ENCODE measurements at regions of chr7 and their contacts with region 1.

Region 1: GRCh38 chr7:28155019-28155660 is 25.5 kb downstream of the JAZF1 start:
- DNase-seq: no peak
- H3K4me3 Mint-ChIP-seq: peak overlapping the region; percentile 4
- H3K27ac Mint-ChIP-seq: peak overlapping the region; percentile 61
- H3K4me1 Mint-ChIP-seq: peaks cover 51% of the 10 kb centered on the region
- H3K27me3 Mint-ChIP-seq: peaks cover 2% of the 10 kb centered on the region

Region 2: DNA sequence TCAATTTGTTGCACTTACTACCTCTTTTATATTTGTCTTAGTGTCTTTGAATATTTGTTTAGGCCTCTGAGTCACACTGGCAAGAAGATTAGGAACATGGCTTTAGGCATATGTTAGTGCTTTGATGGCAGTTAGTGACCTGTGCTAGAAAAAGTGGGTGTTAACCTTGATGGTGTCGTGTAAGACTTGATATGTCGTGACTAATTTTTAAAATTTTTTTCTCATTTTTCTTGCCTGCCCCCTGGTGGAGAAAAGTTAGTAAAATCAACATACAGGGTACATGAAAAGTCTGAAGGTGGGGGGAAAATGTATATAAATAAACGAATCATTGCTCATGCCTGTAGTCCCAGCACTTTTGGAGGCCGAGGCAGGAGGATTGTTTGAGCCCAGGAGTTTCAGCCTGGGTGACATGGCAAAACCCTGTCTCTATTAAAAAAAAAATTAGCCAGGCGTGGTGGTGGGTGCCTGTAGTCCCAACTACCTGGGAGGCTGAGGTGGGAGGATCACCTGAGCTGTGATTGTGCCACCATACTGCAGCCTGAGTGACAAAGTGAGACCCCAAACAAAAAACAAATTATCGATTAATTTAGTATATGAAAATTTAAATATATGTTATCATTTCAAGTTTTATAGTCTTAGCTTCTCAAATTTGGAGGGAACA is 370.6 kb before region 1 on chr7:
- CTCF ChIA-PET with region 1: no interaction called
- POLR2A ChIA-PET with region 1: no interaction called
- intact Hi-C with region 1: loop called (anchors 5 kb)
- DNase-seq: no peak
- H3K4me3 Mint-ChIP-seq: no peak overlapping the region
- H3K27ac Mint-ChIP-seq: no peak overlapping the region
- H3K4me1 Mint-ChIP-seq: peaks cover 33% of the 10 kb centered on the region
- H3K27me3 Mint-ChIP-seq: no peaks in the 10 kb centered on the region

Region 3: DNA sequence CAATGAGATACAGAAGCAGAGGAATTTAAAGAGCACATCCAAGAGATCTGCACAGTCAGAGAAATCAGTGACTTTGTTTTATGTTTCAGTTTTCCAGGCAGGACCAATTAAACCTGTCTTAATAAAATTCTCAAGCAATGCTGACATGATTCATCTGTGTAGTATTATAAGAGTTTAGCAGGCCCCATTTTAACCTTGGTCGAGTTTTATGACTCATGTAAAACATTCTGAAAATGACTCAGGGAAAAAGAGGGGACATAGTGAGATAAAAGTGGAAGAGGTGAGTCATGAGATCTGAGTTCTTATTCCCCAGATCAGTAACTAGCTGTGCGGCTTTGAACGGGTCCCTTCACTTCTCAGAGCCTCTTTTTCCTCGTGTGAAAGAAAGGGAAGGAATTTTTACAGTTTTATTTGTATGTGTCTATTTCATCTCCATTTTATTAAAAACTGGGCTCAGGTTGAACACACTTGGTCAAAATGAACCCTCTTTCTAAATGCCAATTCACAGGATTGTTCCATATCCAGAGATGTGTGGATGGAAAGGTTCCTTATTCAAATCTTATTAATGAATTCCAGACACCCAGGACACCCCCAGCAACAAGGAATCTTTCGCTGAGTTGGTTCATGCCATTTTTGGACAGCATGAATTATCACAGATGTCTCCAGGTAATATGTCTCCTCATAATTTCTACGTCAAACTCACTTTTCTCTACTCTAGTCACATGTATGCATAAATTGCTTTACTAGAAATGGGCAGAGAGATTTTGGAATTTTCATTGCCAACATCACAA is 117.7 kb before region 1 on chr7:
- CTCF ChIA-PET with region 1: no interaction called
- POLR2A ChIA-PET with region 1: no interaction called
- intact Hi-C with region 1: loop called (anchors 1 kb)
- DNase-seq: peak; percentile 41
- H3K4me3 Mint-ChIP-seq: no peak overlapping the region
- H3K27ac Mint-ChIP-seq: peak overlapping the region; percentile 39
- H3K4me1 Mint-ChIP-seq: peaks cover 43% of the 10 kb centered on the region
- H3K27me3 Mint-ChIP-seq: peaks cover 15% of the 10 kb centered on the region

Region 4: DNA sequence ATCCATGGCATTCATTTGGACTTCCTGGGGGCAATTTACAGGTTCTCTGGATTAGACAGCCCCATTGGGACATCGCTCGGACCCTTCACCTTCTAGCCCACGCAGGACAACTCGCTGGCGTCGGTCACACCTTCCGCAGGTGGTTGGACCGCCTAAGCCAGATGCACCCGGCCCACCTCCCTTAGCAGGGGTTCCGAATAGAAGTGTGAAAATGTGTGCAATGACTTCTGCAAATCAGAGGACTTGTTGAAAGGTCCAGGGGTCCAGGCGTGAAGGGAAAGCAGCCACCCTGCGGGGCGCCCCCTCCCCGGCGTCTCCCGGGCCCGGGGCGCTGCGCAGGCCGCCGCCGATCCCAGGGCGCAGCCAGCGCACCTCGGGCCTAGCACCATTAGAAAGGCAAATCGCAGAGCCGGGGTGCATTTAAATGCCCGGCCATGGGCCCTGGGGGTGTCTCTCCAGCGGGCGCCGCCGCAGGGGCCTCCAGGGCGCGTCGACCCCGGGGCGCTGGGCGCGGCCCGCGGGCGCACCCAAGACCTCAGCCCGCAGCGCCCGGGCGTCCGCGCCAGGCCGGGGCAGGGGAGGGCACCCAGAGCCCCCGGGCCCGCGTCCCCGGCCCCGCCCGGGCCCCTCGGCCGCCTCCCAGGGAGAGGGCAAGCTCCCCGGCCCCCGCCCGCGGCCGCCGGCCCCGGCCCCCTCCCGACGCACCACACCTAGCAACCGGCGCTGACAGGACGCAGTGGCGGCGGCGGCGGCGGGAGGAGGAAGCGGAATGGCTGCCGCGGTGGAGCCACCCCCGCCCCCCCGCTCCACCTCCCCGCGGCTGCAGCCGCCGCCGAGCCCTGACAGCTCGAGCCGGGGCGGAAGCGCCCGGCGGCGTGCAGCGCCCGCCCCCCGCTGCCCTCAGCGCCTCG is 24.2 kb after region 1 on chr7:
- CTCF ChIA-PET with region 1: no interaction called
- POLR2A ChIA-PET with region 1: no interaction called
- intact Hi-C with region 1: loop called (anchors 1 kb)
- DNase-seq: peak; percentile 79
- H3K4me3 Mint-ChIP-seq: peak overlapping the region; percentile 70
- H3K27ac Mint-ChIP-seq: peak overlapping the region; percentile 26
- H3K4me1 Mint-ChIP-seq: peaks cover 32% of the 10 kb centered on the region
- H3K27me3 Mint-ChIP-seq: peaks cover 7% of the 10 kb centered on the region

Region 5: GRCh38 chr7:28239823-28240204 is 84.7 kb after region 1 on chr7:
- CTCF ChIA-PET with region 1: no interaction called
- POLR2A ChIA-PET with region 1: no interaction called
- intact Hi-C with region 1: loop called (anchors 1 kb)
- DNase-seq: peak; percentile 12
- H3K4me3 Mint-ChIP-seq: no peak overlapping the region
- H3K27ac Mint-ChIP-seq: no peak overlapping the region
- H3K4me1 Mint-ChIP-seq: peaks cover 9% of the 10 kb centered on the region
- H3K27me3 Mint-ChIP-seq: peaks cover 43% of the 10 kb centered on the region

Region 6: GRCh38 chr7:28329661-28330363 is 174.7 kb after region 1 on chr7:
- CTCF ChIA-PET with region 1: no interaction called
- POLR2A ChIA-PET with region 1: no interaction called
- intact Hi-C with region 1: loop called (anchors 2 kb)
- DNase-seq: peak; percentile 11
- H3K4me3 Mint-ChIP-seq: no peak overlapping the region
- H3K27ac Mint-ChIP-seq: no peak overlapping the region
- H3K4me1 Mint-ChIP-seq: peaks cover 33% of the 10 kb centered on the region
- H3K27me3 Mint-ChIP-seq: peaks cover 8% of the 10 kb centered on the region

Region 7: GRCh38 chr7:29239638-29240037 is 1084.5 kb after region 1 on chr7:
- CTCF ChIA-PET with region 1: no interaction called
- POLR2A ChIA-PET with region 1: no interaction called
- intact Hi-C with region 1: loop called (anchors 10 kb)
- DNase-seq: peak; percentile 42
- H3K4me3 Mint-ChIP-seq: no peak overlapping the region
- H3K27ac Mint-ChIP-seq: no peak overlapping the region
- H3K4me1 Mint-ChIP-seq: peaks cover 16% of the 10 kb centered on the region
- H3K27me3 Mint-ChIP-seq: peaks cover 5% of the 10 kb centered on the region

Measured in activated CD4-positive, alpha-beta memory T cell treated with anti-CD3 and anti-CD28 coated beads for 36 hours (primary cell).